ENCODE measurements at regions of chr4 and their contacts with region 1.

Region 1: DNA sequence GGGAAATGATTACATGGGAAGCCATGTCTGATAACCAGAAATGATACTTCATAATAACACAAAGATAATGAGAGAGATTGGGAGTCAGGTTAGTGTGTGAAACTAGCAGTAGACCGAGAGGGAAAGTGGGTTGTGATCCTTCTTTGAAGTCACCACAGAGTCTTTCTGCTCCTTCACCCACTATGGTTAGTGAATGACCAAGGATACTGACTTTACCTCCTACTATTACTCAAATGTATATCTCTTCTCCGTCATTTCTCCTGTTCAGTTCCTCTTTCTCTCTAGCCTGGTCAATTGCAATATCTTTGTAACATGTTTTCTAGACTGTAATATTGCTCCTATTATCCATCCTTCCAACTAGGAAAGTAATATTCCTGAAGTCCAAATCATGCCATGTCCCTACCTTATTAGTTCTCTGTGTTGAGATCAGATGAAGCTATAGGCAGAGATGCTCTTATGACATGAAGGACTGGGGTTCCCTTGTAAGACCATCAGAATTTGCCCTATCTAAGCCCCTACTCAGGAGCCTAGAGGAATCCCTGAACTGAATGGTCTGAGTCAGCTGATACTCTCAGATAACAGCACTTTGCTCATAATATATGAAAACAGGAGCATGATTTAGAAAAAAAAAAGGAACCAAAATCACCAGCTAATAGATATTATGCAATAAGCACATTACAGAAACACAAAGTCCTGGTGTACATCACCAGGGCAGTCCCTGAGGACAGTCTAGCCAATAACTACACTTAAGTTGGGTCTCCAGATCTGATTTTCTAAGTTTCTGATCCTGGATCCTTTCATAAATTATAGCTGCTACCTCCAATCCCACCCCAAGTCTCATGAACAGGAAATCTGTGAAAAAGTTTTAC is 81.2 kb downstream of the SHROOM3 start:
- DNase-seq: no peak
- ATAC-seq: no peak
- H3K4me3 ChIP-seq: no peak overlapping the region
- H3K27ac ChIP-seq: no peak overlapping the region
- H3K4me1 ChIP-seq: 0 out of 2 replicates have a peak, but pooled peaks cover 1% of the 10 kb centered on the region
- H3K27me3 ChIP-seq: no peaks in the 10 kb centered on the region
- CTCF ChIP-seq: no peak
- POLR2A ChIP-seq: no peak
- RAD21 ChIP-seq: no peak

Region 2: DNA sequence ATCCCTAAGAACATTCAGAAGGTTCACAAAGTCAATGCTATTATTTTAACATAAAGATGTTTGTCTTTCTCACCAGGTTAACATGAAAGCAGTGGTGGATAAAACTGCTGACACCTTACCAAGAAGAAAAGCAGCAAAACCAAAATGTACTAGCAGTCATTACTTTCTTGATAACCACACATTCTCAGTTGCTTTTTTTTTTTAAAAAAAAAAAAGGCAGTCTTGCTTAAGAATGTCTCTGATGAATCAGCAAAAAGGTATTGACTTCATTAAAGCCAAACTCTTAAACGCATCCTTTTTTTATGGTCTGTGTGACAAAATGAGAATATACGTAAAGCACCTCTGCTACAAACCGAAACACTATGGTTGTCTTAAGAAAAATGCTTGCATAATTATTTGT is 917.8 kb before region 1 on chr4:
- CTCF ChIA-PET with region 1: no interaction called
- POLR2A ChIA-PET with region 1: no interaction called
- dilution Hi-C with region 1: no loop called
- in situ Hi-C with region 1: no loop called
- intact Hi-C with region 1: no loop called
- DNase-seq: peak; percentile 39
- ATAC-seq: no peak
- H3K4me3 ChIP-seq: no peak overlapping the region
- H3K27ac ChIP-seq: no peak overlapping the region
- H3K4me1 ChIP-seq: no peaks in the 10 kb centered on the region
- H3K27me3 ChIP-seq: peaks cover 6% of the 10 kb centered on the region
- CTCF ChIP-seq: no peak
- POLR2A ChIP-seq: no peak
- RAD21 ChIP-seq: no peak

Region 3: DNA sequence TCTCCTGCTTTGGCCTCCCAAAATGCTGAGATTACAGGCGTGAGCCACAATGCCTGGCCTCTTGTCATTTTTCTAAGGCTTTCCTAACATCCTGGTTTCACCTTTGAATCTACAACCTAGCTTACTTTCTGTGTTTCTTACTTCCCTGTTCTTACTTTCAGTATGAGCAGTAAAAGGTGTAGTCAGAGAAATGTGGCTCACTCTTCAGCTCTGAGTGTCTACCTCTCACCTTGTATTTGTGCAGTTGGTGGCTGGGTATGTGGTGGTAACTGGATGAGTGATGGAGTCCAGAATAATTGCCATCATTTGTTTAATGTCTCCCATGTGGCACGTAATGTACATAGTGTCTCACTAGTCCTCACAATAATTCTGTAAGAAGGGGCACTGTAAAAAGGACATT is 461.2 kb before region 1 on chr4:
- CTCF ChIA-PET with region 1: no interaction called
- POLR2A ChIA-PET with region 1: no interaction called
- dilution Hi-C with region 1: no loop called
- in situ Hi-C with region 1: no loop called
- intact Hi-C with region 1: no loop called
- DNase-seq: no peak
- ATAC-seq: no peak
- H3K4me3 ChIP-seq: no peak overlapping the region
- H3K27ac ChIP-seq: no peak overlapping the region
- H3K4me1 ChIP-seq: no peaks in the 10 kb centered on the region
- H3K27me3 ChIP-seq: peaks cover 13% of the 10 kb centered on the region
- CTCF ChIP-seq: no peak
- POLR2A ChIP-seq: no peak
- RAD21 ChIP-seq: no peak

Region 4: DNA sequence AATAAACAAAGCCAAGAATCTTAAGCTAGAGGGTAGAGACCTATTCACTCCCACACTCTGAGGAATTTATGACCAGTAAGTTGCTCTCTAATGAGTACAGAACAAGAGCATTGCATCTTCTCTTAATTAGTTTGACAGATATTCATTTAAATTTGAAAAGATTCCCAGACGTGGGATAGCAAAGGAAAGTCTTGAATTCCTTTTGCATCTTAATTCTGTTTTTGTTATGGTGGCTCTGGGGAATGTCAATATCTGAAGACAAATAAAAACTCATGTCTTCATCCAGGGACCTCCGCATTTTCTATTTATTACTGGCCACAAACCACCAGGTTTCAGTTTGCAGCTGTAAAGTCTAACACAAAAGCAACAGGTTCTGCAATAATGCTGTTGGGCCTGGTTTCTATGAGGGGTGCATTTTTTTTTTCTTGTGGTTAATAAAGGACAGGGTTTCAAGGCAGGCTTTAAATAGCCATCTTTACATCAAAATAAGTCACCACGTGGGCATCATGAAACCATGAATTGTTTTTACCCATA is 91.1 kb after region 1 on chr4:
- CTCF ChIA-PET with region 1: no interaction called
- POLR2A ChIA-PET with region 1: no interaction called
- dilution Hi-C with region 1: no loop called
- in situ Hi-C with region 1: no loop called
- intact Hi-C with region 1: loop called (anchors 5 kb)
- DNase-seq: peak; percentile 47
- ATAC-seq: peak; percentile 41; the same call in 1 of the 2 replicates
- H3K4me3 ChIP-seq: no peak overlapping the region
- H3K27ac ChIP-seq: no peak overlapping the region
- H3K4me1 ChIP-seq: peaks cover 13% of the 10 kb centered on the region
- H3K27me3 ChIP-seq: no peaks in the 10 kb centered on the region
- CTCF ChIP-seq: no peak
- POLR2A ChIP-seq: no peak
- RAD21 ChIP-seq: no peak

Region 5: DNA sequence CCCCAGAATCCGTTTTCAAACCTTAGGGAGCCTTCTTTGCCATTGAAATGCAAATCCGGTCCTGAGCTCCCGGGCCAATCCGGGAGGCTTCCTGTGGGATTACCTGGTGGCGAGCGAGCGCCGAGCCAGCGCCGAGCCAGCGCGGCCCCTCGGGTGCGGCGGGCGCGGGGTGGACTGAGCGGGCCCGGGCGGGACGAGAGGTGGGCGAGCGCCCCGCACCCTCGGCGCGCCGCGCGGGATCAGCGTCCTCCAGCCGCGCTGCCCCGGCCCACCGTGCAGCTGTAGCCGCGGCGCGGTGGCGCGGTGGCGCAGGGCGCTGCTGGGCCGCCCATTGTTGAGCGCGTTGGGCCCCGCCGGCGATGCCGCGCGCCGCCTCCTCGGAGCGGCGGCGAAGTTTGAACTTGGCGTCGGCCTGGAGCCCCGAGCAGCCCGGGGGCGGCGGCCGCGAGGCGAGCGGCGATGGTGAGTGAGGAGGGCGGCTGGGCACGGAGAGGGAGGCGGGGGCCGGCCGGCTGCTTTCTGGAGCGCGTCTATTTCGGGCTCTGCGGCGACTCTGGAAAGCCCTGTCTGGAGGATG is 173.1 kb after region 1 on chr4:
- CTCF ChIA-PET with region 1: no interaction called
- POLR2A ChIA-PET with region 1: no interaction called
- dilution Hi-C with region 1: no loop called
- in situ Hi-C with region 1: no loop called
- intact Hi-C with region 1: loop called (anchors 1 kb)
- DNase-seq: peak; percentile 28
- ATAC-seq: peak; percentile 92
- H3K4me3 ChIP-seq: peak overlapping the region; percentile 97
- H3K27ac ChIP-seq: peak overlapping the region; percentile 99
- H3K4me1 ChIP-seq: peaks cover 12% of the 10 kb centered on the region
- H3K27me3 ChIP-seq: no peaks in the 10 kb centered on the region
- CTCF ChIP-seq: peak; percentile 3; the same call in 1 of the 2 replicates
- POLR2A ChIP-seq: peak; percentile 30; the same call in 1 of the 2 replicates
- RAD21 ChIP-seq: peak; percentile 26; the same call in 1 of the 2 replicates

Region 6: GRCh38 chr4:76758290-76758882 is 242.2 kb after region 1 on chr4:
- CTCF ChIA-PET with region 1: interaction called, 3 read pairs
- POLR2A ChIA-PET with region 1: no interaction called
- dilution Hi-C with region 1: no loop called
- in situ Hi-C with region 1: loop called (anchors 5 kb)
- intact Hi-C with region 1: no loop called
- DNase-seq: peak; percentile 81
- ATAC-seq: no peak
- H3K4me3 ChIP-seq: no peak overlapping the region
- H3K27ac ChIP-seq: peak overlapping the region; percentile 77; the same call in 1 of the 2 replicates
- H3K4me1 ChIP-seq: peaks cover 40% of the 10 kb centered on the region
- H3K27me3 ChIP-seq: no peaks in the 10 kb centered on the region
- CTCF ChIP-seq: peak; percentile 77
- POLR2A ChIP-seq: no peak
- RAD21 ChIP-seq: peak; percentile 67

Region 7: DNA sequence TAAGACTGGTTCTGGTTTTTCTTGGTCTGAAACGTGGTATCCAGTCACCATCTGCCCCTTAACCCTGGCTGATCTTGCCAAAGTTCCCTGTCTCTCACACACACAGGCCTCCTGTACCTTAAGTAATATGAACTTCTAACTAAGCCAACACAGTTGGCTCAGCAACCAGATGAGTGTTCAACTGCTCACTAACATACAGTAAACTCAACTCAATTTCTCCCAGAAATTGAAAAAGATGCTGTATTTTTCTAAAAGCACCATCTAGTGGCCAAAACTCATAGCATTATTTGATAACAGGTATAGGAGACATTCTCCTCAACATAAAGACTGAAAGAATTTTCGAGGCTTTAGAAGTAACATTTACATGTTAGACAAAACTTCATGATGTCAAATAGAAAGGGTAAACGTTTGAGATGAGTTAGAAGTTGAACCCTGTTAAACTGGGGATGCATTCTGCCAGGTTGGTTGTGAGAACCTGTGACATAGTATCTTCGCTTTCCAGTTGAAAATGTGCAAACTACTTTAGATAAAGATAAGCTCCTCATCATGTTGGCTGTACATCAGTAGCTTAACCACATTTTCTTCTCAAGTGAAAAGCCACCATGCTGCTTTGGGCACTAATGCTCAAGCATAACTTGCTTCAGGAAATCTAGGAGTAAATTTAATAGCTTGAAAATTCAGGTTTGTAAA is 528.4 kb after region 1 on chr4:
- CTCF ChIA-PET with region 1: no interaction called
- POLR2A ChIA-PET with region 1: no interaction called
- dilution Hi-C with region 1: no loop called
- in situ Hi-C with region 1: no loop called
- intact Hi-C with region 1: loop called (anchors 1 kb)
- DNase-seq: peak; percentile 80
- ATAC-seq: peak; percentile 36; the same call in 1 of the 2 replicates
- H3K4me3 ChIP-seq: no peak overlapping the region
- H3K27ac ChIP-seq: peak overlapping the region; percentile 12; the same call in 1 of the 2 replicates
- H3K4me1 ChIP-seq: peaks cover 10% of the 10 kb centered on the region
- H3K27me3 ChIP-seq: no peaks in the 10 kb centered on the region
- CTCF ChIP-seq: peak; percentile 64
- POLR2A ChIP-seq: no peak
- RAD21 ChIP-seq: peak; percentile 40

Region 8: GRCh38 chr4:77177199-77177598 is 661.0 kb after region 1 on chr4:
- CTCF ChIA-PET with region 1: no interaction called
- POLR2A ChIA-PET with region 1: no interaction called
- dilution Hi-C with region 1: no loop called
- in situ Hi-C with region 1: no loop called
- intact Hi-C with region 1: no loop called
- DNase-seq: no peak
- ATAC-seq: no peak
- H3K4me3 ChIP-seq: no peak overlapping the region
- H3K27ac ChIP-seq: no peak overlapping the region
- H3K4me1 ChIP-seq: peaks cover 7% of the 10 kb centered on the region
- H3K27me3 ChIP-seq: peaks cover 66% of the 10 kb centered on the region
- CTCF ChIP-seq: no peak
- POLR2A ChIP-seq: no peak
- RAD21 ChIP-seq: no peak